Activated CD4-positive, alpha-beta memory T cell treated with anti-CD3 and anti-CD28 coated beads for 36 hours (primary cell): ENCODE measurements at regions of chr19 and their contacts with region 1.

Region 1: GRCh38 chr19:41883821-41884733 is 1.1 kb downstream of the ARHGEF1 start:
- DNase-seq: peak; percentile 95
- H3K4me3 Mint-ChIP-seq: peak overlapping the region; percentile 95
- H3K27ac Mint-ChIP-seq: peak overlapping the region; percentile 97
- H3K4me1 Mint-ChIP-seq: peaks cover 59% of the 10 kb centered on the region
- H3K27me3 Mint-ChIP-seq: no peaks in the 10 kb centered on the region

Region 2: DNA sequence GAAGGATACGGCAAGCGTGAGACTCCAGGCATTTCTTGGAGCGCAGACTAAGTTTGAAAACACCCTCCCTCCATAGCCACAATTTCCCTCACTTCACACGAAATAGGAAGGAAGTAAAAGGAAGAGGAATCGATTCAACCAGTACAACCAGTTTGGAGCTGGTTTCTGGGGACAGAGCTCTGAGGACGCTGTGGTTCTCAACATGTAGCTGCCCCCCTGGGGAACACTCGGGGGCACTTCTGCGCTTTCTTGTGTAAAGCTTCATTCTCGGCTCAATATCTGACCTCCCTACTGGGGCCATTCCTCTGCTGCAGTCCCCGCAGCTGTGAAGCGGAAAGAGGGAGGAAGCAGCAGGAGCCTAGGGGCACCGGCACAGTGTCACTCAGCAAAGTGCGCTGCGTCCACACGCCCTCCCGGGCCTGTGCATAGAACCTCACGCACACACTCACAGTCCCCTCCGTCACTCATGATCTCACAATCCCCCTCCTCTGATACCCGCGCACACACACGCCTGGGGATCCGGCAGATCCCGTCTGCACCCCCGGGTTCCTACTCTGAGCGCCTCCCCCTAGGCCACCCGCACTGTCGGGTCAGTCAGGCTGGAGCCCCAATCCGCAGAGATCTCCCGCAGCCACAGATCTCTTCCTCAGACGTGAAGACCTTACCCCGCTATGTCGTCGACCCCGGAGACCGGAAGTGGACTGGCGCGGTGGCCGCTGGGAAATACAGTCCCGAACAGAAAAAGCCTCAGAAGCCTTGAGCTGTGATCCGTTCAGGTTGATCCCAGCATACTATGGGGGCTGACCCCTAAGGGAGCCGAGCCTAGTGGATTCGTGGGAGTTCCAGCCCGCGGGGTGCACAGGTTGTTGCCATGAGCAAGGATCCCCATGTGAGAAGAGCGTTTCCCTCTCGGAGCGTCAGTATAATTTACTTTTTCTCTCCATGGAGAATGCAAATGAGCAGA is 1793.6 kb before region 1 on chr19 and contains the start of gene ZNF780A:
- CTCF ChIA-PET with region 1: no interaction called
- POLR2A ChIA-PET with region 1: no interaction called
- intact Hi-C with region 1: no loop called
- DNase-seq: peak; percentile 87
- H3K4me3 Mint-ChIP-seq: peak within 1 kb of the TSS; percentile 100
- H3K27ac Mint-ChIP-seq: peak within 1 kb of the TSS; percentile 99
- H3K4me1 Mint-ChIP-seq: peaks cover 37% of the 10 kb centered on the region
- H3K27me3 Mint-ChIP-seq: peaks cover 2% of the 10 kb centered on the region
- total RNA-seq, gene ZNF780A: 17.2 to 17.3 TPM

Region 3: GRCh38 chr19:41934849-41935374 is 50.8 kb after region 1 on chr19:
- CTCF ChIA-PET with region 1: interaction called, 5 read pairs
- POLR2A ChIA-PET with region 1: no interaction called
- intact Hi-C with region 1: loop called (anchors 1 kb)
- DNase-seq: peak; percentile 88
- H3K4me3 Mint-ChIP-seq: peak overlapping the region; percentile 4
- H3K27ac Mint-ChIP-seq: peak overlapping the region; percentile 55
- H3K4me1 Mint-ChIP-seq: peaks cover 35% of the 10 kb centered on the region
- H3K27me3 Mint-ChIP-seq: peaks cover 1% of the 10 kb centered on the region